ENCODE measurements at regions of chr16 and their contacts with region 1.

Region 1: DNA sequence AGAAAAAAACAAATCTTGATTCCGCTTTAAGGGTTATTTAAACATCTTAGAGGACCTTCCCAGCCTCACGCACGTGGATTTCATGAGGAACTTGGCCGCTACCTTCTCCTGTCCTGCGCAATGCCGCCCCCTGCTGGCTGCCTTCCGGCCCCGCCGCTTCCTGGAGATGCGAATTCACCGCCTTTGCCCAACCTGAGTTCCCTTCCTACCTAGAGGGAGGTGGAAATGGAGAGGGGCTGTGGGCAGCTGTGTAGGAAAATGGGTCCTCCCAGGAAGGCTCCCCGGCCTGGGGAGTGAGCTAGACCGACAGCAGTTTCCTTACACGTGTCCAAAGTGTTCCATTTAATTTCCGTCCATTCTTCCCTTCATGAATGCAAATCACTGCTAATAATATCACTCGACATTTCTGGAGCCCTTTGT is 1.0 kb upstream of the ABCC12 start:
- DNase-seq: peak; percentile 95
- H3K4me3 ChIP-seq: no peak overlapping the region
- H3K27ac ChIP-seq: no peak overlapping the region
- H3K4me1 ChIP-seq: peaks cover 0 to 8% (median 5%) of the 10 kb centered on the region in 6 donors
- H3K27me3 ChIP-seq: peaks cover 0 to 14% (median 0%) of the 10 kb centered on the region in 7 donors
- CTCF ChIP-seq: peak; percentile 73 to 96 (median 92)
- POLR2A ChIP-seq: no peak

Region 2: DNA sequence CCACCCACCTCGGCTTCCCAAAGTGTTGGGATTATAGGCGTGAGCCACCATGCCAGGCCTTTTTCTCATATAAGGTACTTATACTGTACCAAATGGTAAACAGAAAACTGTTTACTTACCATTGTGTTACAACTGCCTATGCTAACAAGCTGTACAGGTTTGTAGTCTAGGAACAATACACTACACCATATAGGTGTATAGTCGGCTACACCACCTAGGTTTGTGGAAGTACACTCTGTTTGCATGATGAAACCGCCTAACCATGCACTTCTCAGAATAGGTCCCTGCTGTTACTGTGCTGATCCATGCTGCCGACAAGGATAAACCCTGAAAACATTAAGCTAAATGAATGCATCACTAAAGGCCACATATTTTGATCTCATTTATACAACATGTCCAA is 1202.2 kb before region 1 on chr16:
- intact Hi-C with region 1: loop called (anchors 10 kb)
- DNase-seq: no peak
- H3K4me3 ChIP-seq: no peak overlapping the region
- H3K27ac ChIP-seq: no peak overlapping the region
- H3K4me1 ChIP-seq: peaks cover 0 to 9% (median 0%) of the 10 kb centered on the region in 6 donors
- H3K27me3 ChIP-seq: no peaks in the 10 kb centered on the region
- CTCF ChIP-seq: no peak
- POLR2A ChIP-seq: no peak

Region 3: DNA sequence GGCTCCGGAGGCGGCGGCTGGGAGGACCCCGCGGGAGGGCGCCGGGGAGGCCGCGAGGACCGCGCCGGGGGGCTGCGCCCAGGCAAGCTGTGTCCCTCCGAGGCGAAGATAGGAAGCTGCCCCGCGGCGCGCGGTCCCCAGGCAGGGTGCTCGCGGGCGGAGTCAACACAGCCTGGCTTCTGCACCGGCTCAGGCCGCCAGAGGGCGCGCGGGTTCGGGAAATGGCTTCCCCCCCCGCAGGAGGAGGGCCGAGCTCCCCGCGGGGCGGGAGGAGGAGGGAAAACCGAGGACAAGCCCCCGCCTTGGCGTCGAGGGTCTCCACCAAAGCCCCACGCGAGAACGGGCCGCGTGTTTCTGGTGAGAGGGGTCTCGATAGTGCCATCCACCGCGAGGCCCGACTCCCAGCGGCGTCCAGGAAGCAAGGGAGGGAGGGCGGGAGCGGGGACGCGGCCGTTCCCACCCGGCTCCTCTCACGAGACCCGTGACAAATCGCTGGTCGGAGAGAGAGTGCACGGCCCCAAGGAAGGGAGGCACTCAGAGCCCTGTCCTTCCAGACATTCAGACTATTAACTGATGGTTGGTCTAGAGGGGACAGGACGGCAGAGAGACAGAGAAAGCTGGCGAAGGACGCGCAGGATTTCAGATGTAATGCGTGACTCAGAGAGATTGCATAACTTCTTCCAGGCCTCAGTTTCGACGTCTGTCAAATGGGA is 1118.9 kb before region 1 on chr16:
- intact Hi-C with region 1: loop called (anchors 5 kb)
- DNase-seq: peak; percentile 98
- H3K4me3 ChIP-seq: peak overlapping the region; percentile 48 to 77 (median 60)
- H3K27ac ChIP-seq: peak overlapping the region; percentile 50 to 86 (median 68)
- H3K4me1 ChIP-seq: peaks cover 0 to 34% (median 11%) of the 10 kb centered on the region in 6 donors
- H3K27me3 ChIP-seq: peaks cover 0 to 12% (median 0%) of the 10 kb centered on the region in 7 donors
- CTCF ChIP-seq: peak; percentile 83 to 99 (median 96)
- POLR2A ChIP-seq: no peak

Region 4: DNA sequence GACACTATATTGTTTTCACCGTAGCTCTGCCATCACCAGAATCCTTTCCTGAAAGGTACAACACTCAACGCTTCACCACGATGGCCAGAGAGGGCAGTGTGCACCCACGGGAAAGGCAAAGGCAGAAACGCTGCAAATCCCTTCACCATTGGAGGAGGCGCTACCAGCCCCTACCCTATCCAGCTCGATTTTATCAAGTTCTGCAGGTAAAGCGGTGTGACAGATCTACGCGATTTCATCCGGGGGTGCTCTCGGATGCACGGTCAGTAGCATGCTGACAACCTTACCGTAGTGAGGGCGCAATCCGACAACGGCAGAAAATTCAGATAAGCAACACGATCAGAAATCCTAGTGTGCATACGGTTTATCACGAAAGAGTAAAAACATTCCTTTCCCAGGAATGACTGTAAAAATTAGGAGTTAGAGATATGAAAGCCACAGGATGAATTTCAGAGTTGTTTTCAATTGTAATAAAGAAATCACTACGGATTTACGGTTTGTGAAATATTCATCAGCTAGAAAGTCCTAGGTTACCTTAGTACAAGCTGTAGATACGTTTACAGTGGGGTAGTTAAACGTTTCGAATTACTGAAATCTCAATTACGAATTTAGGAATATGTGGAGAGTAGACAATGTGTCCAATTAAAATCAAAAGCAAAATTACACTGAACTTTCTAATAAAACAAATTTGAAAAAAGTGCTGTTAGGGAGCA is 1014.9 kb before region 1 on chr16:
- intact Hi-C with region 1: loop called (anchors 5 kb)
- DNase-seq: peak; percentile 93
- H3K4me3 ChIP-seq: peak overlapping the region; percentile 53 to 88 (median 68)
- H3K27ac ChIP-seq: peak overlapping the region; percentile 4 to 90 (median 86)
- H3K4me1 ChIP-seq: peaks cover 3 to 67% (median 30%) of the 10 kb centered on the region in 6 donors
- H3K27me3 ChIP-seq: peaks cover 0 to 38% (median 6%) of the 10 kb centered on the region in 7 donors
- CTCF ChIP-seq: peak; percentile 69 to 92 (median 86)
- POLR2A ChIP-seq: no peak

Measured in spleen (tissue), 13 donors.